ENCODE measurements at regions of chr11 and their contacts with region 1.

Region 1: GRCh38 chr11:34357701-34358257 is at the start of gene ABTB2:
- DNase-seq: peak; percentile 98
- H3K4me3 Mint-ChIP-seq: peak within 1 kb of the TSS; percentile 88
- H3K27ac Mint-ChIP-seq: peak within 1 kb of the TSS; percentile 77
- H3K4me1 Mint-ChIP-seq: peaks cover 39% of the 10 kb centered on the region
- H3K27me3 Mint-ChIP-seq: peaks cover 22% of the 10 kb centered on the region
- total RNA-seq, gene ABTB2: 14.1 and 14.5 TPM in 2 replicates

Region 2: DNA sequence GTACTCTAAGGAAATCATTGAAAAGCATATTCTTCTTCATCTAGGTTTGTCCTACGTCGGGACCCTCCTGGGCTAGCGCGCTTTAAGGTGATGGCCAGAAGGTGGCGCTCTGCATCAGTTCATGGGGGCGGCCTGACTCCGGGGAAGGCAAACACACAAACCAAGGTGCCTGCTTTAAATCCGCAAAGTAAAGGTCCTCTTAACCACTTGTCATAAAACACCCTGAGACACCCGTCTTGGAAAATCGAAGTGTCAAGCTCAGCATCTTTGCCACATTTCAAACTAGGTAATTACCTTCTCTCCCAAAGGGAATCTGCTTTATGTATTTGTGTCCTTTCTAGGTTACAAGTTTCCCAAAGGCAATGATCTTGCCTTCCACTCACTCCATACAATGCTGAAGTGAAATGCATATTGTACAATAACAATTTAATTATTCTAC is 499.8 kb before region 1 on chr11:
- intact Hi-C with region 1: loop called (anchors 1 kb)
- DNase-seq: peak; percentile 44
- H3K4me3 Mint-ChIP-seq: no peak overlapping the region
- H3K27ac Mint-ChIP-seq: no peak overlapping the region
- H3K4me1 Mint-ChIP-seq: no peaks in the 10 kb centered on the region
- H3K27me3 Mint-ChIP-seq: peaks cover 46% of the 10 kb centered on the region

Region 3: DNA sequence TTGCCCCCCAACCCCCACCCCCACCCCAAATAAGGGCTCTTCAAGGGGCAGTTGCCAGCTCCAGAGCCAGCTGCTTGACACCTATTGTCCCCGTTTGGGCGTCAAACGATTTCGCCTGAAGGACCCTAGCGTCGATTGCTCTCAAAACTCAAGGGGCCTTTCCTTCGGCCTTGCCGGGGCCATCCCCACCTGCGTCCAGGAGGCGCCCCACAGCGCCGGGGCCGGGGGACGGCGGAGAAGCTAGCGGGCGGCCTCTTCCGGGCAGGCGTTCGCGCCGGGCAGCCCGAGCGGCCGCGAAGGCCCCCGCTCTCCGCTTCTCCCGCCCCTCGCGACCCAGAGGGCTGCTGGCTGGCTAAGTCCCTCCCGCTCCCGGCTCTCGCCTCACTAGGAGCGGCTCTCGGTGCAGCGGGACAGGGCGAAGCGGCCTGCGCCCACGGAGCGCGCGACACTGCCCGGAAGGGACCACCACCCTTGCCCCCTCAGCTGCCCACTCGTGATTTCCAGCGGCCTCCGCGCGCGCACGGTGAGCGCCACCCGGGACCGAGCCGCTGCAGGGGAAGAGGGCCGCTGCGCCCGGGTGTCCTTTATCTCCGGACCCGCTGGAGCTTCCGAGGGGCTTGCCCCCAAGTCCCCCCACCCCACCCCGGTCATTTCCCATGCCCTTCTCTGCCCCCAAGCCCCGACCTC is 306.3 kb before region 1 on chr11 and contains the start of gene CAPRIN1:
- intact Hi-C with region 1: loop called (anchors 1 kb)
- DNase-seq: peak; percentile 80
- H3K4me3 Mint-ChIP-seq: peak within 1 kb of the TSS; percentile 99
- H3K27ac Mint-ChIP-seq: peak within 1 kb of the TSS; percentile 97
- H3K4me1 Mint-ChIP-seq: peaks cover 8% of the 10 kb centered on the region
- H3K27me3 Mint-ChIP-seq: no peaks in the 10 kb centered on the region
- total RNA-seq, gene CAPRIN1: 285 and 289 TPM in 2 replicates

Region 4: DNA sequence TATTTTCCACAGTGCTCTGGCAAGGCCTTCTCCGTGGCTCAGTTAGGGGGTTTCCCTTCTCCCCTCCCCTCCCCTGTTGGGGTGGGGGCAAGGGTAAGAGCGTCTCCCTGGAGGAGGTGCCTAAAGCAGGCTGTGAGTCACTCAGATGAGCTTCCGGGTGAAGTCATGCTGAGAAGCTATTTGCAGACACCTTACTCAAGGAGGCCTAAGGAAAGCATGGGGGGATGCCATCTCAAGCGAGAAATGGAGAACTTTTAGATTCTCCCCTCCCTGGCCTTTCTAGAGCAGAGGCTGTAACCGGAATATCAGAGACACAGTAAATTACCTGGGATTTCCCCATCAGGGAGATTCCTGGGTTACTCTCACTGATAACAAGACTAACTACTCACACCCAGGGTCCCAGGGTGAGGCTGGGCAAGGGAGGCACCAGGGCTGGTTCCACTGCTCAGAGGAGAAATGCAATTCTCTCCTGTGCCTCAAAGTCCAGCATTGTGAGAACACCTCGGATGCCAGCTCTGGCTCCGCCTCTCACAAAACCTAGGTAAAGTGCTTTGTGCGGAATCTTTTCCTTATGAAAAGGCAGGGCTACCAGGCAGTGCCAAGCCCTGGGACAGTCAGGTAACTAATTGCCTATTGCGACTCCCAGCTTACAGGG is 123.6 kb before region 1 on chr11:
- intact Hi-C with region 1: loop called (anchors 1 kb)
- DNase-seq: peak; percentile 80
- H3K4me3 Mint-ChIP-seq: peak overlapping the region; percentile 50
- H3K27ac Mint-ChIP-seq: peak overlapping the region; percentile 85
- H3K4me1 Mint-ChIP-seq: peaks cover 61% of the 10 kb centered on the region
- H3K27me3 Mint-ChIP-seq: peaks cover 12% of the 10 kb centered on the region

Region 5: DNA sequence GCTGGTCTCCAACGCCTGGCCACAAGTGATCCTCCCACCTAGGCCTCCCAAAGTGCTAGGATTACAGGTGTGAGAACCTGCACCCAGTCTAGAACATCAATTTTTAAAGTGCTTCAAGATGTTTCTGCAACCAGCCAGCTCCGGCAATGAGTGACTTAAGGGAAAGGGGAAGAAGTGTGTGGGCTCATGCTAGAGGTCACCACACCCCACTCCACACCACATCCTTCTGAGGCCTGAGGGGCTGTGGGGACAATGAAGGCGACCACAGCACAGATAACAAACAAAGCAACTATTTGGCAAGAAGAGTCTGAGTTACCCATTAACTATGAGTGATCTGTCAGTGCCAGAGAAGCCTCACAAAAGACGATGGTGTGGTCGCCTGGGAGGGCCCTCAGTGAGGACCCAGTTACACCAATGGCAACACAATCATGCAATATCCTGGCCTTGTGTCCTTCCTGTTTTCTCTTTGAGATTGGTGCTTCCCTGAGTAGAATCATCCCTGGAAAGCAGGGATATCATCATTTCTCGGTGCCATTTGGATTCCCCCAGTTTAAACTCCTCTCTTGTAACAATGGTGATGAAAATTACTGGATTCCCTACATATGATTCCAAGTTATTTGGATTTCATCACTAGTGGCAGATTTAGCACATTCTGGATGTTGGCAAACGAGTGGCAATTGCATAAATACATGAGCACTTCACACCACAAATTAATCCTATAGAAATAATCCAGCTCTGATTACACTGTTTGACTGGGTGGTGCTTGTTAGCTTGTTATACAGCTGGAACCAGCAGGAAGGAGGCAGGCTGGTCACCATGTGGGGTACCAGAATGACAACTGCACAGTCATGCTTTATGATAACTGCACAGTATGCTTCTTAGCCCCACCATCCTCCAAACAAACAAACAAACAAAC is 18.4 kb before region 1 on chr11:
- intact Hi-C with region 1: loop called (anchors 2 kb)
- DNase-seq: no peak
- H3K4me3 Mint-ChIP-seq: no peak overlapping the region
- H3K27ac Mint-ChIP-seq: no peak overlapping the region
- H3K4me1 Mint-ChIP-seq: peaks cover 7% of the 10 kb centered on the region
- H3K27me3 Mint-ChIP-seq: peaks cover 3% of the 10 kb centered on the region

Region 6: GRCh38 chr11:35144136-35144741 is 786.5 kb after region 1 on chr11:
- intact Hi-C with region 1: loop called (anchors 2 kb)
- DNase-seq: peak; percentile 69
- H3K4me3 Mint-ChIP-seq: peak overlapping the region; percentile 97
- H3K27ac Mint-ChIP-seq: peak overlapping the region; percentile 93
- H3K4me1 Mint-ChIP-seq: peaks cover 84% of the 10 kb centered on the region
- H3K27me3 Mint-ChIP-seq: no peaks in the 10 kb centered on the region

Measured in activated T-helper 1 cell treated with anti-CD3 and anti-CD28 coated beads, Interleukin-12 subunit alpha, Interleukin-12 subunit beta, Interleukin-2, Interleukin-4 antibody, amounts not matched to agents 30 ng/mL and 10 ng/mL and 1 ng/mL, durations not matched to agents 14 hours and 24 hours and 36 hours (primary cell).